Activated B cell treated with CpG ODN at 0.5 μM for 24 hours (primary cell): ENCODE measurements at regions of chr11 and their contacts with region 1.

Region 1: DNA sequence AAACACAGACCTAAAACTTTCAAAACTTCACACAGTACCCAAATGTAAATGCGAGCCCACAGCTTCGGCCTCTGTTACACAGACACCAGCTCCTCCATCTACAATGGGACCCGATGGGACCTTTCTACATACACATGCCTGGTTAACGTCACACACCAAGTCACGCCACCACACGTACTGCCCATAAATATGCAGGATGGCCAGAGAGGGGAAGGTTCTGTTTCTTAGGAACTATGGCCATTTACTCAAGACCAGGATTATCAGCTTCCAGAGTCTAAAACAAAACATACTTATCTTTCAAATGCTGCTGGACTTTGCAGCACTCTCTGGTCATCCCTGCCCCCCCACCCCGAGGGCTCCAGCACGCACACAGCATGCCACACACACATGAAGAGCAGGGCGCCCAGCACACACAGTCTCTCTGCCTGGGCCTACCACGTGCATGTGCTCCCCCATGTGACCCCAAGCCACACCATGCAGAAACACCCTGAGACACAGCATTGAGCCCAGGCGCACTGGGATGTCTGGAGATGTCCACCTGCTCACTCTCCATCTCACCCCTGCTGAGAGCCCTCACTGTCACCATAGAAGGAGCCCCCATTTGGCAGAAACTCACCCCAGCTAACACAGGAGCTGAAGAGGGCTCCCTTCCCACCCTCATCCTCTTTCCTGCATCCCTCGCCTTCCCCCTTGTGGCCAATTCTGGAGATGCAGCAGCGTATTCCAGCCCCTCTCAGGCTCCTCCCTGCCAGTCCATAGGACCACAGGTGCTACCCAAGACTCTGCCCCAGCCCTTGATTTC is 61.8 kb downstream of the SLC22A12 start:
- DNase-seq: peak; percentile 59
- ATAC-seq: peak; percentile 60
- H3K4me3 Mint-ChIP-seq: no peak overlapping the region
- H3K27ac Mint-ChIP-seq: no peak overlapping the region
- H3K4me1 Mint-ChIP-seq: peaks cover 27% of the 10 kb centered on the region
- H3K27me3 Mint-ChIP-seq: peaks cover 5% of the 10 kb centered on the region
- CTCF ChIP-seq: no peak

Region 2: DNA sequence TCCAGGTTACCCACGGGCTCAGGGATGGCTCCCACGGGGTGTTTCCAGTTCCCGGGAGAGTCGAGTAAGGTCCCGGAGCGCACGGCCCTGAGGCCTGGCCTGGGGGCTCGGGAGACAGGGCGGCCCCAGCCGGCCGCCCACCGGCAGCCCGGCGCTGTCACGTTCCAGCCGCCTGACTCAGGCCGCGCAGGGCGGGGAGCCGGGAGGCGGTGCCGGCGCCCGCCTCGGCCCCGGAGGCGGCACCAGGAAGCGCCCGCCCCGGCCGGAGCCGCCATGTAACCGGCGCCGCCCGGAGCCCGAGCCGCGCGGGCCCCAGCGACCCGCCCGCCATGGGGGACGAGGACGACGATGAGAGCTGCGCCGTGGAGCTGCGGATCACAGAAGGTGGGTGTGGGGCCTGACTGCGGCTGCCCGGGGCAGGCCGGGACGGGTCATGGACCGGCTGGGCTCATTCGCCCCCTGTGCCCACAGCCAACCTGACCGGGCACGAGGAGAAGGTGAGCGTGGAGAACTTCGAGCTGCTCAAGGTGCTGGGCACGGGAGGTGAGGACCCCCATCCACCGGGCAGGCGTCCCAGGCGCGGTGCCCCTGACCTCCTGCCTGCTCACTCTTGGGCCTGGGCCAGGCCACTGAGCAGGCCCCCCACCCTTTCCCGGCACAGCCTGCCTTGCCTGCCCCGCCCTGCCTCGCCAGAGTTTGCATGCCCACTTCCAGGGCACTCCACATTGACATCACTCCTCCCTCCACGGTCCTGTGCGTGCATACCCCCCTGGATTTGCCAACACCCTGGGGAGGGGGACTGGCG is 293.7 kb before region 1 on chr11 and contains the start of gene RPS6KA4:
- CTCF ChIA-PET with region 1: interaction called, 10 read pairs
- POLR2A ChIA-PET with region 1: no interaction called
- intact Hi-C with region 1: loop called (anchors 5 kb)
- DNase-seq: peak; percentile 55
- ATAC-seq: peak; percentile 72
- H3K4me3 Mint-ChIP-seq: peak within 1 kb of the TSS; percentile 82
- H3K27ac Mint-ChIP-seq: peak within 1 kb of the TSS; percentile 53
- H3K4me1 Mint-ChIP-seq: peaks cover 47% of the 10 kb centered on the region
- H3K27me3 Mint-ChIP-seq: no peaks in the 10 kb centered on the region
- CTCF ChIP-seq: no peak
- total RNA-seq, gene RPS6KA4: 18.0 and 22.6 TPM in 2 replicates

Region 3: GRCh38 chr11:64489831-64490441 is 162.9 kb before region 1 on chr11:
- CTCF ChIA-PET with region 1: no interaction called
- POLR2A ChIA-PET with region 1: no interaction called
- intact Hi-C with region 1: loop called (anchors 1 kb)
- DNase-seq: peak; percentile 36
- ATAC-seq: peak; percentile 49
- H3K4me3 Mint-ChIP-seq: no peak overlapping the region
- H3K27ac Mint-ChIP-seq: no peak overlapping the region
- H3K4me1 Mint-ChIP-seq: peaks cover 18% of the 10 kb centered on the region
- H3K27me3 Mint-ChIP-seq: peaks cover 18% of the 10 kb centered on the region
- CTCF ChIP-seq: peak; percentile 36

Region 4: DNA sequence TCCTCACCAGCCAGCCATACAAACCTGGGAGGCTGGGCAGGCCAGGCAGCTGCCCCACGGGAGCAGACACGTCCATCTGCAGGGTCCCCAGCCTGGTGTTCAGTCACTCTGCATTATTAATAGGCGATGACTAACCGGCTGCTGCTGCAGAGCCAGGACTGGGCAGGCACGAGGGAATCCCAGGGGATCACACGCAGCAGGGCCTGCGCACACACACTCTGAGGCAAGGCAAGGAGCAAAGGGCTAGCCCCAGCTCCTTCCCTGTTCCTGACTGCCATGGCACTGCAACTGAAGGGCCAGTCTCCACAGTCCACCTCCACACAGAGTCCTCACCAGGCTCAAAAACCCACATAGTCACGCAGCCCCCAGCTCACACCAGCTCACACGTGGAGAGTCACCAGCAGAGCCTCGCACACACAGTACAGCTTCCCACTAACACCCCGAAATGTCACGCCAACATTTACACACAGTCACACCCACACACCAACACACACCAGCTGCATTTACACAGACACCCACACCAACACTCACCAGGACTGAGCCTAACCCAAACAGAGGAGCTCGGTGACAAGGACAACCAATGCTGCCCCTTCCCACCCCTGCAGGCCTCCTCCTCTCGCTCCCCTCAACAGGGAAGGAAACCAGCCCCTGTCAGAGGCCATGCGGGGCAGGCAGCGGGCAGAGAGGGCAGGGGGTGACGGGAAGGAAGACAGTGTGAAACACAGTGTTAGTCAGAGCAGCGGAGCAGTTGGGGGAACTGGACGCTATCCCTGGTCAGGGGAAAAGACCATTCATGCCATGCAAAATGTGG is 22.9 kb after region 1 on chr11:
- CTCF ChIA-PET with region 1: interaction called, 12 read pairs
- POLR2A ChIA-PET with region 1: no interaction called
- intact Hi-C with region 1: no loop called
- DNase-seq: peak; percentile 26
- ATAC-seq: peak; percentile 82
- H3K4me3 Mint-ChIP-seq: peak overlapping the region; percentile 32
- H3K27ac Mint-ChIP-seq: no peak overlapping the region
- H3K4me1 Mint-ChIP-seq: peaks cover 34% of the 10 kb centered on the region
- H3K27me3 Mint-ChIP-seq: peaks cover 45% of the 10 kb centered on the region
- CTCF ChIP-seq: no peak

Region 5: GRCh38 chr11:64723117-64723906 is 70.5 kb after region 1 on chr11 and contains the start of gene NRXN2:
- CTCF ChIA-PET with region 1: no interaction called
- POLR2A ChIA-PET with region 1: interaction called, 6 read pairs
- intact Hi-C with region 1: loop called (anchors 1 kb)
- DNase-seq: peak; percentile 88
- ATAC-seq: peak; percentile 89
- H3K4me3 Mint-ChIP-seq: peak within 1 kb of the TSS; percentile 81
- H3K27ac Mint-ChIP-seq: peak within 1 kb of the TSS; percentile 76
- H3K4me1 Mint-ChIP-seq: peaks cover 22% of the 10 kb centered on the region
- H3K27me3 Mint-ChIP-seq: peaks cover 30% of the 10 kb centered on the region
- CTCF ChIP-seq: peak; percentile 64
- total RNA-seq, gene NRXN2: 0.54 and 0.73 TPM in 2 replicates